Panc1 (cell line): ENCODE measurements at regions of chr9 and their contacts with region 1.

Region 1: GRCh38 chr9:98146101-98146991 is 27.3 kb upstream of the TRIM14 start:
- DNase-seq: no peak
- ATAC-seq: no peak
- H3K4me3 ChIP-seq: no peak overlapping the region
- H3K27ac ChIP-seq: no peak overlapping the region
- H3K4me1 ChIP-seq: no peaks in the 10 kb centered on the region
- H3K27me3 ChIP-seq: no peaks in the 10 kb centered on the region
- CTCF ChIP-seq: no peak

Region 2: GRCh38 chr9:97866848-97867247 is 279.5 kb before region 1 on chr9:
- CTCF ChIA-PET with region 1: no interaction called
- POLR2A ChIA-PET with region 1: no interaction called
- in situ Hi-C with region 1: no loop called
- intact Hi-C with region 1: no loop called
- DNase-seq: no peak
- ATAC-seq: no peak
- H3K4me3 ChIP-seq: no peak overlapping the region
- H3K27ac ChIP-seq: no peak overlapping the region
- H3K4me1 ChIP-seq: no peaks in the 10 kb centered on the region
- H3K27me3 ChIP-seq: no peaks in the 10 kb centered on the region
- CTCF ChIP-seq: no peak

Region 3: GRCh38 chr9:98056269-98057137 is 89.8 kb before region 1 on chr9 and contains the start of gene NANS:
- CTCF ChIA-PET with region 1: no interaction called
- POLR2A ChIA-PET with region 1: no interaction called
- in situ Hi-C with region 1: no loop called
- intact Hi-C with region 1: no loop called
- DNase-seq: peak; percentile 56
- ATAC-seq: peak; percentile 98
- H3K4me3 ChIP-seq: peak within 1 kb of the TSS; percentile 73 to 83
- H3K27ac ChIP-seq: peak within 1 kb of the TSS; percentile 83
- H3K4me1 ChIP-seq: 0 out of 2 replicates have a peak, but pooled peaks cover 4% of the 10 kb centered on the region
- H3K27me3 ChIP-seq: no peaks in the 10 kb centered on the region
- CTCF ChIP-seq: no peak
- total RNA-seq, gene NANS: 41.0 TPM

Region 4: GRCh38 chr9:98157372-98157771 is 11.0 kb after region 1 on chr9:
- CTCF ChIA-PET with region 1: no interaction called
- POLR2A ChIA-PET with region 1: interaction called, 14 read pairs
- in situ Hi-C with region 1: no loop called
- intact Hi-C with region 1: no loop called
- DNase-seq: no peak
- ATAC-seq: no peak
- H3K4me3 ChIP-seq: no peak overlapping the region
- H3K27ac ChIP-seq: no peak overlapping the region
- H3K4me1 ChIP-seq: 0 out of 2 replicates have a peak, but pooled peaks cover 6% of the 10 kb centered on the region
- H3K27me3 ChIP-seq: no peaks in the 10 kb centered on the region
- CTCF ChIP-seq: no peak

Region 5: GRCh38 chr9:100074989-100075388 is 1928.6 kb after region 1 on chr9:
- CTCF ChIA-PET with region 1: no interaction called
- POLR2A ChIA-PET with region 1: interaction called, 22 read pairs
- in situ Hi-C with region 1: no loop called
- intact Hi-C with region 1: no loop called
- DNase-seq: no peak
- ATAC-seq: no peak
- H3K4me3 ChIP-seq: no peak overlapping the region
- H3K27ac ChIP-seq: no peak overlapping the region
- H3K4me1 ChIP-seq: no peaks in the 10 kb centered on the region
- H3K27me3 ChIP-seq: no peaks in the 10 kb centered on the region
- CTCF ChIP-seq: no peak